Spleen (tissue), 13 donors: ENCODE measurements at regions of chr4 and their contacts with region 1.

Region 1: GRCh38 chr4:68673143-68673542 is 2.7 kb upstream of the UGT2B15 start:
- DNase-seq: no peak
- H3K4me3 ChIP-seq: no peak overlapping the region
- H3K27ac ChIP-seq: no peak overlapping the region
- H3K4me1 ChIP-seq: no peaks in the 10 kb centered on the region
- H3K27me3 ChIP-seq: no peaks in the 10 kb centered on the region
- CTCF ChIP-seq: no peak
- POLR2A ChIP-seq: no peak

Region 2: DNA sequence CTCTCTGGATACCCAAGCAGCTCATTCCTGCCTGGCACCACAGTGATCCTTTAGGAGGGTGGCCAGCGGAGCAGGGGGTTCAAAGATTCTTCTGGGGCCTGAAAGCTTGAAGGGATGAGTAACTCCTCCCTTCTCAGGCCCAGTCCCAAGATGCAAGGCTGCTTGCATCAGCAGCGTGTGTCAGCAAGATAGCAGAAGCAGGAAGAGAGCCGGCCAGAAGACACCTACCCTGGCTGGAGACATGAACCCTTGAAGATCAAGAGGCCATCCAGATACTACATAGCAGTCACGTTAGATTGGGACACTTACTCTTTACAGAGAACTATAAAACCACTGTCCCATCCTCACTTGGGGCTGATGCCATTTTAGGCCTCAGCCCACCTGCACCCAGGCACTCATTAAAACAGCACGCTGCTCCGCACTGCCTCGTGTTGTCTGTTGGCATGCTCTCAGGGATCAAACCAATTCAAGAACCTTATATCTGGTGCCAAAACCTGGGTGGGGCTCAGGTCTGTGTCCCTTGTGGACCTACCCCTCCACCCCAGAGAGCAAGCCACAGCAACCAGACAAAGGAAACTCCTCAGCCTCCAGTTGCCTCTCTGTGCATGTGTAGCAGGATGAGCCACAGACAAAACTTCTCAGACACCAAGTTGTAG is 103.5 kb before region 1 on chr4:
- intact Hi-C with region 1: loop called (anchors 5 kb)
- DNase-seq: no peak
- H3K4me3 ChIP-seq: no peak overlapping the region
- H3K27ac ChIP-seq: no peak overlapping the region
- H3K4me1 ChIP-seq: no peaks in the 10 kb centered on the region
- H3K27me3 ChIP-seq: no peaks in the 10 kb centered on the region
- CTCF ChIP-seq: no peak
- POLR2A ChIP-seq: no peak

Region 3: GRCh38 chr4:68606240-68606639 is 66.9 kb before region 1 on chr4:
- intact Hi-C with region 1: no loop called
- DNase-seq: no peak
- H3K4me3 ChIP-seq: no peak overlapping the region
- H3K27ac ChIP-seq: no peak overlapping the region
- H3K4me1 ChIP-seq: no peaks in the 10 kb centered on the region
- H3K27me3 ChIP-seq: no peaks in the 10 kb centered on the region
- CTCF ChIP-seq: no peak
- POLR2A ChIP-seq: no peak

Region 4: DNA sequence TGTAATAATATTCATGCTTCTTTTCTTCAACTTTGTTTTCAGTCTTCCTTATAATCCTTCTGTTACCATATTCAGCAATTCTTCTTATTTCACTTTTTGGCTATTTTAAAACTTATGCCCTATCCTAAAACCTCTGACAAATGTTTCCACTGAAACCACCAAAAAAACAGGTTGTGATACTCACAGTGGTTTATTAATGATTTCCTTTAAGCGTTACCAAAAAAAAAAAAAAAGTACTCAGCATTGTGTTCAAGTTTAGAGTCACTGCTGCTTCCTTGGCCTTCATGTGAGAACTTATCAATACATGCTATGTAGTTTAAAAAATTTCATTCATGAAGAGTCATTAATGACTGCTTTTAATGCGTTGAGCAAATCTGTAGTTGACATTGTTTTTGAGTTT is 313.9 kb after region 1 on chr4:
- intact Hi-C with region 1: no loop called
- DNase-seq: no peak
- H3K4me3 ChIP-seq: no peak overlapping the region
- H3K27ac ChIP-seq: no peak overlapping the region
- H3K4me1 ChIP-seq: no peaks in the 10 kb centered on the region
- H3K27me3 ChIP-seq: no peaks in the 10 kb centered on the region
- CTCF ChIP-seq: no peak
- POLR2A ChIP-seq: no peak